Gastrocnemius medialis (tissue), 4 donors: ENCODE measurements at regions of chr3 and their contacts with region 1.

Region 1: GRCh38 chr3:160754855-160755747 is 930 bp upstream of the PPM1L start:
- DNase-seq: peak; percentile 91 to 93
- ATAC-seq: peak; percentile 65 to 79
- H3K4me3 ChIP-seq: peak overlapping the region; percentile 82 to 97 (median 89)
- H3K27ac ChIP-seq: peak overlapping the region; percentile 94 to 99 (median 96)
- H3K4me1 ChIP-seq: peaks cover 20 to 25% of the 10 kb centered on the region in 2 donors
- H3K27me3 ChIP-seq: no peaks in the 10 kb centered on the region
- CTCF ChIP-seq: peak in 3 of 5 experiments; percentile 7 to 30 (median 19)
- POLR2A ChIP-seq: peak; percentile 92 to 98

Region 2: DNA sequence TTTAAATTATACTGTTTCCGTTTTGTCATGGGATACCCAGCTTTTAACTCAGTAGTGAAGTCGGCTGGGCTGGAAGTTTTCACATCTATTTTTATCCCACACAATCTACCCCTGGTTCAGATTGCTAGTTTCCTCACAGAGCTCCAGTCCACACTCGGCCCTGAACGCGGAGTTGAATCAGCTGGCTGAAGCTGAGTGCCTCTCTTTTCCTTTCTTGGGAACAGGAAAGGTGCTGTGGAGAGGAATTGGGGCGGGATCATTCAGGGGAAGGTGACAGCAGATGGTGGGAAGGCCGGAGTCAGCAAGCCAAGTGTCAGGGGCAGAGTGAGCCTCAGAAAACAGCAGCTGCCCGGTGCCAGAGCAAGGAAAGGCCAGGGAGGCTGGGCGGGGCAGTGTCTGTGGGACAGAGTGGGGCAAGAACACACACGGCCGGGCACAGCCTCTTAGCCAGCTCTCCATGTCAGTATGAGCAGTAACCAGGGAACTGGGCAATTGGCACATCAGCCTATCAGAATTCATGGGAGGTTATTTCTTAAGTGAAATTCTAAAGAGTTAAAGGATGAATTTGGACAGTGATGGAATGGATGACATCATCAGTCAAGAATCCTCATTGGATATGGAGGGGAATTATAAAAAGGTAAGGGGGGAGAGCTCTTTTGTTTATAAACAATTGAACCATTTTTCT is 902.1 kb before region 1 on chr3:
- in situ Hi-C with region 1: no loop called
- intact Hi-C with region 1: loop called (anchors 10 kb)
- DNase-seq: peak; percentile 87 to 92
- ATAC-seq: peak; percentile 66 to 73
- H3K4me3 ChIP-seq: peak overlapping the region; percentile 51 to 69 (median 60)
- H3K27ac ChIP-seq: peak overlapping the region; percentile 86 to 97 (median 92)
- H3K4me1 ChIP-seq: peaks cover 64 to 72% of the 10 kb centered on the region in 2 donors
- H3K27me3 ChIP-seq: no peaks in the 10 kb centered on the region
- CTCF ChIP-seq: no peak
- POLR2A ChIP-seq: peak; percentile 74 to 83

Region 3: GRCh38 chr3:160720123-160720746 is 34.9 kb before region 1 on chr3:
- in situ Hi-C with region 1: no loop called
- intact Hi-C with region 1: no loop called
- DNase-seq: no peak
- ATAC-seq: no peak
- H3K4me3 ChIP-seq: no peak overlapping the region
- H3K27ac ChIP-seq: no peak overlapping the region
- H3K4me1 ChIP-seq: no peaks in the 10 kb centered on the region
- H3K27me3 ChIP-seq: no peaks in the 10 kb centered on the region
- CTCF ChIP-seq: no peak
- POLR2A ChIP-seq: no peak

Region 4: GRCh38 chr3:160739079-160739478 is 16.0 kb before region 1 on chr3:
- in situ Hi-C with region 1: no loop called
- intact Hi-C with region 1: loop called (anchors 1 kb)
- DNase-seq: peak; percentile 86 to 93
- ATAC-seq: peak; percentile 98
- H3K4me3 ChIP-seq: no peak overlapping the region
- H3K27ac ChIP-seq: peak overlapping the region; percentile 63 to 82 (median 74)
- H3K4me1 ChIP-seq: peaks cover 34 to 42% of the 10 kb centered on the region in 2 donors
- H3K27me3 ChIP-seq: no peaks in the 10 kb centered on the region
- CTCF ChIP-seq: no peak
- POLR2A ChIP-seq: peak in 1 of 2 donors; percentile 19

Region 5: GRCh38 chr3:160810362-160811236 is 55.5 kb after region 1 on chr3:
- in situ Hi-C with region 1: loop called in 1 of 4 experiments (anchors 10 kb)
- intact Hi-C with region 1: loop called (anchors 2 kb)
- DNase-seq: peak; percentile 66 to 67
- ATAC-seq: peak; percentile 53 to 57
- H3K4me3 ChIP-seq: no peak overlapping the region
- H3K27ac ChIP-seq: peak overlapping the region; percentile 91 to 94 (median 92)
- H3K4me1 ChIP-seq: peaks cover 79 to 82% of the 10 kb centered on the region in 2 donors
- H3K27me3 ChIP-seq: no peaks in the 10 kb centered on the region
- CTCF ChIP-seq: peak in 1 of 5 experiments; percentile 5
- POLR2A ChIP-seq: no peak

Region 6: DNA sequence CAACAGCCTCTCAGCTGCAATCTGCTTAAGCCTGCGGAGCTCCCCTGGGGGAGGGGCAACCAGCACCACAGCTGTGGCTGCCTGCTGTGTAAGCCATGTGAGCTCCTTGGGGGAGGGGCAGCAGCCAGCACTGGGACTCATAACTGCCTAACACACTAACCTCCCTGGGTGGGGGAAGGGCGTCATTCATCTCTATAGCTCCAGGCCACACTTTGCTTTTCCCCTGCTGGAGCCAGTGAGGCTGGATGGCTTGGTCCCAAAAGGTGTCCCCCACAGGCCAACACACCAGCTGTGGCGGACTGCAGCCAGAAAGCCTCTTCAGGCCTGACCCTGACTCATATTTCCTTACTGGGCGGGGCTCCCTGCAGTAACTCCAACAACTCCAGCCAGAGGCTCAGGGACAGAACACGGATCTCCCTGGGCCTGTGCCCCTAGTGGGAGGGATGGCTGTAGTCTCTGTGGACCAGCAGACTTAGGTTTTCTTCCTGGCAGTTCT is 130.7 kb after region 1 on chr3:
- in situ Hi-C with region 1: no loop called
- intact Hi-C with region 1: loop called (anchors 2 kb)
- DNase-seq: peak; percentile 97 to 100
- ATAC-seq: peak; percentile 94 to 96
- H3K4me3 ChIP-seq: peak overlapping the region in 2 of 4 donors; percentile 3 to 42
- H3K27ac ChIP-seq: peak overlapping the region; percentile 82 to 91 (median 84)
- H3K4me1 ChIP-seq: peaks cover 47 to 51% of the 10 kb centered on the region in 2 donors
- H3K27me3 ChIP-seq: no peaks in the 10 kb centered on the region
- CTCF ChIP-seq: peak; percentile 23 to 57 (median 41)
- POLR2A ChIP-seq: no peak

Region 7: GRCh38 chr3:160941885-160942494 is 186.9 kb after region 1 on chr3:
- in situ Hi-C with region 1: no loop called
- intact Hi-C with region 1: loop called (anchors 1 kb)
- DNase-seq: peak; percentile 35 to 53
- ATAC-seq: peak; percentile 85 to 90
- H3K4me3 ChIP-seq: no peak overlapping the region
- H3K27ac ChIP-seq: peak overlapping the region in 1 of 4 donors; percentile 15
- H3K4me1 ChIP-seq: peaks cover 4 to 7% of the 10 kb centered on the region in 2 donors
- H3K27me3 ChIP-seq: no peaks in the 10 kb centered on the region
- CTCF ChIP-seq: peak; percentile 84 to 91 (median 86)
- POLR2A ChIP-seq: no peak

Region 8: DNA sequence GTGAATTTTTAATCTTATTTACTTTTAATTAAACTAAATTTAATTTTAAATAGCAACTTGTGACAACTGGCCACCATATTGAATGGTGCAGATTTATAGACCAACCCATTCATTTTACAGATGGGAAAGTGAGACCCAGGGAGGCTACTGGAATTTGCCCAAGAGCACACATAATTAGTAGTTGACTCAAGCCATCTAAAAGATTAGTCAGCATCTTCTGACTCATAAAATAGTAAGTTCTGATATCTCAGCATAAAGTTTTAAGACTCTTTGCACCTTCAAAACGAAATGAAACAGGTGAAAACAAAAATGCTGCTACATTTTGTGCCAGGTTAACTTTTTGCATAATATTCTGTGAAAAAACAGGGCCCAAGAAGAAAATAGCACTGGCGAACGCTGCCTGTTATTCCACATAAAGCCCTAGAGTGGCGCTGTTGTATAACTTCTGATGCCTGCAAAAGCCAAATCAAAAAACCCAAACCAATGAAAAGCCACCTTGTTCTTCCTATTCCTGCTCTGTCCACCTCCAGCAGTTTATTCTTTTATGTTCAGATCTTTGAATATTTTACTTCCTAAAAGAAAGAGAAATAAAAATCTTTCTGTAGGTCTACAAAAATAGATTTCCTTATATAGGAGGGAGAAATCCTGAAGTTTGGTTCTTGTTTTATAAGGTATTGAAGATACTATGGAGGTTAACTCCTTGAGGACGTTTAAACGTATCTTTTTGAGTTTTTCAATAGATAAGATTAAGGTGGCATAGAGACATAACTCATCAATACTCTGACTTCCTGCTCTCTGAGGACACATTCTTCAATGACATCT is 804.3 kb after region 1 on chr3:
- in situ Hi-C with region 1: no loop called
- intact Hi-C with region 1: no loop called
- DNase-seq: no peak
- ATAC-seq: no peak
- H3K4me3 ChIP-seq: no peak overlapping the region
- H3K27ac ChIP-seq: no peak overlapping the region
- H3K4me1 ChIP-seq: no peaks in the 10 kb centered on the region
- H3K27me3 ChIP-seq: no peaks in the 10 kb centered on the region
- CTCF ChIP-seq: peak in 4 of 5 experiments; percentile 19 to 55 (median 40)
- POLR2A ChIP-seq: no peak